ENCODE measurements at regions of chr12 and their contacts with region 1.

Region 1: DNA sequence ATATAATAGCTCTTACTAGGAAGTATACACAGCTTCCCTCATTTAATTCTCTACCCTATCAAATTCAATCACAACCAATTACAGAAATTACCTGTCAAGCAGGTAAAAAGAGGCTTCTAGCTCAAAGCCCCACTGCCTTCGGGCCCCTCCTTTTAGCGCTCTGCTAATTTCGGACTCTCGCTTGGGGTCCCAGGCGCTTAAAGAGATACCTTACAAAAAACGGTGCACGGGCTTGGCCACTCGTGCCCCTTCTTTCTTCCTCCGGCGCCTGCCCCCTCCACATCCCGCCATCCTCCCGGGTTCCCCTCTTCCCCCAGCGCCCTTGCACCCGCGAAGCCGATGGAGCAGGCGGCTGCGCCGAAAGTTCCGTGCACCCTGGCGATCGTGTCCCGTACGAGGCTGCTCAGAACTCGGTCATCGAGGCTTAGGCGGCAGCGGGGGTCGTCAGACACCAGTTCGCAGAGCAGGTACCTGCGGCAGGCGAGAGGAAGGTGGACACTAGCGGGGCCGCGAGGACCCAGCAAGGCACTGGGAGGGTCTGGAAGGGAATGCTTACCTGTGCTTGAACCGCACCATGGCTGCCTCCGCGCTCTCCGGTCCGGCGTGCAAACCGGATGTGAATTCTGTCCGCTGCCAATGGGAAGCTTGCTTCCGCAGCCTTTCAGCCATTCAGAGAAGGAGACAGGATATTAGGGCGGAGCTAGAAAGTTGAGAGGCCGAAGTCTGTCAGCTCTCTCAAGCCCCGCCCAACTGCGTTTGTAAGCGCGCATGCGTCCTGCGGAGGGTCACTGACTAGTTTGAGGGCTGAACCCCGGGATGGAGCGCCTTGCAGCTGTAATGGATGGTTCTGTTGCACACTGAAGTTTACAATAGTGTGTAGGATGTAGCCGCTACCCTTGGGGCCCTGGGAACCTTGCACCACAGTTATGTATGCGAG is at the start of gene POP5:
- DNase-seq: peak; percentile 93
- ATAC-seq: peak; percentile 95
- H3K4me3 ChIP-seq: peak within 1 kb of the TSS; percentile 91
- H3K27ac ChIP-seq: peak within 1 kb of the TSS; percentile 44
- H3K4me1 ChIP-seq: peaks cover 11% of the 10 kb centered on the region
- H3K27me3 ChIP-seq: no peaks in the 10 kb centered on the region; a peak in 1 of 4 replicates
- CTCF ChIP-seq: no peak
- EP300 ChIP-seq: no peak
- POLR2A ChIP-seq: peak; percentile 97
- RAD21 ChIP-seq: no peak
- polyA plus RNA-seq, gene POP5: 217 to 234 TPM

Region 2: GRCh38 chr12:120327593-120327992 is 253.5 kb before region 1 on chr12 and contains the start of gene PLA2G1B:
- CTCF ChIA-PET with region 1: interaction called, 5 read pairs
- POLR2A ChIA-PET with region 1: no interaction called
- RAD21 ChIA-PET with region 1: no interaction called
- SMC1A ChIA-PET with region 1: interaction called, 8 read pairs
- in situ Hi-C with region 1: no loop called
- intact Hi-C with region 1: loop called (anchors 2 kb)
- DNase-seq: no peak
- ATAC-seq: no peak
- H3K4me3 ChIP-seq: no peak within 1 kb of the TSS
- H3K27ac ChIP-seq: no peak within 1 kb of the TSS
- H3K4me1 ChIP-seq: no peaks in the 10 kb centered on the region
- H3K27me3 ChIP-seq: no peaks in the 10 kb centered on the region
- CTCF ChIP-seq: no peak
- EP300 ChIP-seq: no peak
- POLR2A ChIP-seq: no peak
- RAD21 ChIP-seq: no peak
- polyA plus RNA-seq, gene PLA2G1B: not detected

Region 3: GRCh38 chr12:120534203-120534702 is 46.8 kb before region 1 on chr12 and contains the start of gene RNF10:
- CTCF ChIA-PET with region 1: interaction called, 10 read pairs
- POLR2A ChIA-PET with region 1: interaction called, 11 read pairs
- RAD21 ChIA-PET with region 1: interaction called, 10 read pairs
- SMC1A ChIA-PET with region 1: interaction called, 6 read pairs
- in situ Hi-C with region 1: no loop called
- intact Hi-C with region 1: no loop called
- DNase-seq: peak; percentile 68
- ATAC-seq: peak; percentile 78
- H3K4me3 ChIP-seq: peak within 1 kb of the TSS; percentile 70
- H3K27ac ChIP-seq: peak within 1 kb of the TSS; percentile 75
- H3K4me1 ChIP-seq: peaks cover 25% of the 10 kb centered on the region
- H3K27me3 ChIP-seq: no peaks in the 10 kb centered on the region
- CTCF ChIP-seq: no peak
- EP300 ChIP-seq: no peak
- POLR2A ChIP-seq: peak; percentile 95
- RAD21 ChIP-seq: no peak
- polyA plus RNA-seq, gene RNF10: 55.3 to 58.3 TPM

Region 4: DNA sequence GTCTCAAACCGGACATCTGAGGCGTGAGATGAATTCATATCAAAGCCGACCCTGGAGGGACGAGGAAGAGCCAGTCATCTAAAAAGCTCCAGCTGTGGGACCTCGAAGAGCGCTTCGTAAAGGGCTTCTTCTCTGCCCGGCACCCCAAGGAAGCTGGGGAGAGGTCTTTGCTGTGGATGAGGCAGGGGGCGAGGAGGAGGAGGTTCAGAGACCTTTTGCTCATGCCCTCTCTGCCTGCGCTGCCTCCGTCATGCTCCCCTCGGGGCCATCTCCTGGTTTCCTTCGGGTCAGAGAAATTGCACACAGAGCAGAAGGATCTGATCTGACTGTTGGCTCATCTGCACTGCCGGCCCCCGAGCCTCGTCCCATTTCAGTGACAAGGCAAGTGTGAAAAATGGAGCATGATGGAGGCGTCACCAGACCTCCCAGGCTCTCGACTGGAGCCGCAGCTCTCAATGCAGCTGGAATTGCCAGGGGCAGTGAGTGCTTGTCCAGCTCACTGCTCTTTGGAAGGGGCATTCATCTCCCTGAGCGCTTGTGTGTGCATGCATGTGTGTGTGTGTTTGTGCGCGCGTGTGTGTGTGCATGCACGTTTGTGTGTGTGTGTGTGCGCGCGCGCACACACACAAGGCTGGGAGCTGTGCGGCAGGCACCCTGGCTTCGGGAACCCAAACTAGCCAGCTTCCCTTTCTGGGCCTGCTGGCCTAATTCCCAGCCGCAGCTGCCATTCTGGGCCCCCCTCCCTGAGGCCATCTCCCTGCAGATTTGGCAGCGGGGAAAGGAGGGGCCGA is 68.6 kb after region 1 on chr12:
- CTCF ChIA-PET with region 1: interaction called, 104 read pairs
- POLR2A ChIA-PET with region 1: no interaction called
- RAD21 ChIA-PET with region 1: interaction called, 57 read pairs
- SMC1A ChIA-PET with region 1: interaction called, 31 read pairs
- in situ Hi-C with region 1: no loop called
- intact Hi-C with region 1: loop called (anchors 5 kb)
- DNase-seq: no peak
- ATAC-seq: peak; percentile 13
- H3K4me3 ChIP-seq: peak overlapping the region; percentile 61; the same call in 1 of the 2 replicates
- H3K27ac ChIP-seq: no peak overlapping the region
- H3K4me1 ChIP-seq: peaks cover 19% of the 10 kb centered on the region
- H3K27me3 ChIP-seq: no peaks in the 10 kb centered on the region
- CTCF ChIP-seq: no peak
- EP300 ChIP-seq: no peak
- POLR2A ChIP-seq: no peak
- RAD21 ChIP-seq: no peak

Region 5: DNA sequence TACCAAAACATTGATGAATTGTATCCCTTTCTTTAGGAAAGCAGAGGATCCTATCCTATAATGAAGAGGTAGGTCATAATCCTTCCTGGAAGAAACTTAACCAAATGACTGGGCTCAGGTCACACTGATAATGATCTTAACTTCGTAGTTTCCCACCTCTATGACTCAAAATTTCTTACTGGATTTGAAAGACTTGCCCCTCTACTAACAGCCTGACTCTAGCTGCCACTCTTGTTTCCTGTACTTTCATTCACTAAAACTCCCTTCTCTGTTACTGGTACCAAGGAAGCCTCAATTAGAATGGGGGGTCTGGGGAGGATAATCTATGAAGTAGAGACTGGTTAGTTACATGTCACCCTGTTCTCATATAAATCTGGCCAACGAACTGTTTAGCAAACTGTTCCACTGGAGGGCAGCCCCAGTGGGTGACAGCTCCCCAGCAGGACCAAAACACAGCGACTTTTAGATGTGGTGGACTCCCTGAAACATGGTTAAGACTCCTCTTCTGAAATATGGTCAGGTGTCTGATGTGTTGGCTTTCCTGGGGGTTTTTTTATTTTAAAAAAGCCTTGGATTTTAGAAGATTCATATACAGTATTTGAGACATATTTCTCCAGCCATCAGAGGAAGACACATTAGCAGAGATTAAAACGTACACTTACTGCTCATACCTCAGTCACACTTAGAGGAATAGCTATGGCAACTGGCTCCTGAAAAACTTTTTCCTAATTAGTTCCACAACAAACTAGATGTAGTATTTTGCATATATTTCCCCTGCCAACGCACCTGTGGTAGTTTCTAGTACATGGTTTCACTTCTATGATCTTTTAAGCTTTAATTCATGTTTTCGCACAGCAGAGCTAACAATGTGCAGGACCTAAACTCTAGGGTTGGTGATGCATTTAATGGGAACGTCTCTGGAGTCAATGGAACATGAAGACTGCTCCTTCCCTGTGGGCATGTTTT is 216.9 kb after region 1 on chr12:
- CTCF ChIA-PET with region 1: interaction called, 5 read pairs
- POLR2A ChIA-PET with region 1: no interaction called
- RAD21 ChIA-PET with region 1: no interaction called
- SMC1A ChIA-PET with region 1: interaction called, 10 read pairs
- in situ Hi-C with region 1: no loop called
- intact Hi-C with region 1: no loop called
- DNase-seq: peak; percentile 51
- ATAC-seq: peak; percentile 66
- H3K4me3 ChIP-seq: peak overlapping the region; percentile 35
- H3K27ac ChIP-seq: peak overlapping the region; percentile 76
- H3K4me1 ChIP-seq: peaks cover 46% of the 10 kb centered on the region
- H3K27me3 ChIP-seq: no peaks in the 10 kb centered on the region
- CTCF ChIP-seq: 0 out of 6 replicates have a peak, but pooled peaks of 2 of the 3 experiments have one; percentile 1 to 5
- EP300 ChIP-seq: no peak
- POLR2A ChIP-seq: no peak
- RAD21 ChIP-seq: peak; percentile 32; the same call in 1 of the 2 replicates

Region 6: DNA sequence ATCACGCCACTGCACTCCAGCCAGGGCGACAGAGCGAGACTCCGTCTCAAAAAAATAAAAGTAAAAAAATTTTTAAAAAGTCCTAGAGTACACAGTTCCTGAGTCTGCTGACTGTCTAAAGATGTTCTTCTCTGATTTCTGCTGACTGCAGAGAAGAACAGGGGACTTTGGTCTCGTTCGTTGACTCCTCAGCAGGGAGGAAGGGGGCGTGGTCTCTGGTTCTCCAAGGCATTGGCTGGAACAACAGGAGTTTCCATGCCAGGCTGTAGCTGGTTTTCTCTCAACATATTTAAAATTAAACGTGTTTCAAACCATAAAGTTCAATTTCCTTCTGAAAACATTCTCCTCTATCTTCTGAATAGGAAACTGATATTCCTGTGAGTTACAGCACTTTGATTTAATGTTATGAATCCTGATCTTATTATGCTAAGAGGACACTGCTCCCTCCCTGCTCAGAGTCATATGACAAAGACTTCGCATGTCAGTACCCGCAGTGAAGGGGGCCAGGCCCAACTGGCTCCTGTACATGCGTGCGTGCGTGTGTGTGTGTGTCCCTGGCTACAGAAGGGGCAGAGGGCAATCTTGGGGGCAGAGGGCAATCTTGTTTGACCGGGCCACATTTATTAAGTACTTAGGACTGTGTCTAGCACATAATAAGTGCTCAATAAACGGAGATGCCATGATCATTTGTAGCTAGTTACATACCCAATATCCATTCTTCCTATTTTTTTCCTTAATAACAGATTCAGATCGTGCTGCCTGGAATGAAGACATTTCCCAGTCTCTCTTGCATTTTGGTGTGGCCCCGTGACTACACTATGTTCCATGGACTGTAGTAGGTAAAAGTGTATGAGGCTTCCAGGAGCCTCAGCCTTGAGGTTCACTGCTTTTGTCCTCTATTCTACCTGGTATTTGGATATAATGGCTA is 380.8 kb after region 1 on chr12:
- CTCF ChIA-PET with region 1: interaction called, 10 read pairs
- POLR2A ChIA-PET with region 1: no interaction called
- RAD21 ChIA-PET with region 1: no interaction called
- SMC1A ChIA-PET with region 1: interaction called, 3 read pairs
- in situ Hi-C with region 1: no loop called
- intact Hi-C with region 1: no loop called
- DNase-seq: no peak
- ATAC-seq: no peak
- H3K4me3 ChIP-seq: no peak overlapping the region
- H3K27ac ChIP-seq: no peak overlapping the region
- H3K4me1 ChIP-seq: peaks cover 10% of the 10 kb centered on the region
- H3K27me3 ChIP-seq: no peaks in the 10 kb centered on the region
- CTCF ChIP-seq: no peak
- EP300 ChIP-seq: no peak
- POLR2A ChIP-seq: no peak
- RAD21 ChIP-seq: no peak

Region 7: DNA sequence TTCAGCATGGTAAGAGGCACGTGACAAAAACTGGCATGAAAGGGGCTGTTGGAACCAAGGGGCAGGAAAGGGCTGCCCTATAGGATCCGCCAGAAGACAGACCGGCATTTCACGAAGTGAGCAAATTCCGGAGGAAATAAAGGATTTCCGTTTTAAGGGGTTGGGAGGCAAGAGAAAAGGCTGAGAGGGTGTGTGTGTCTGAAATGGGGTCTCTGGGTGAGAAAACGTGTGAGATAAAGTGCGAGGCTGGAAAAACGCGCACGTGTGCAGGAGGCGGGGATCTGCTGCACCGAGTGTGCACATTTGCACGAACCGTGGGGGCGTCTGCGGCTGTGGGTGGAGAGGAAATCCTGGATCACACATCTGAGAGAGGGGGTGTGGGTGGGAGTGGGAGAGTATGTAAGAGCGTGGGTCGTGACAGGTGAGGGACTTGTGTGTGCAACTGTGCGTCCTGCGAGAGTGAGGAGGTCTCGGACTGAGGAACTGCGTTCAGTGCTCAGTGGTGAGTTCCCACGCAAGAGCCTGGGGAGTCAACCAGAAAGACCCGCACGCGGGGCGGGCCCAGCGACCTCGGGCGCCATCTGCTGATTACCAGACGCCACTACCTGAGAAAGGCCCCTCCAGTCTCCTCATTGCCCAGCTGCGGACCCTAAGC is 514.6 kb after region 1 on chr12:
- CTCF ChIA-PET with region 1: interaction called, 12 read pairs
- POLR2A ChIA-PET with region 1: no interaction called
- RAD21 ChIA-PET with region 1: interaction called, 3 read pairs
- SMC1A ChIA-PET with region 1: interaction called, 6 read pairs
- in situ Hi-C with region 1: no loop called
- intact Hi-C with region 1: loop called (anchors 5 kb)
- DNase-seq: peak; percentile 21
- ATAC-seq: peak; percentile 97
- H3K4me3 ChIP-seq: no peak overlapping the region; the same call in 1 of the 2 replicates
- H3K27ac ChIP-seq: no peak overlapping the region
- H3K4me1 ChIP-seq: peaks cover 9% of the 10 kb centered on the region
- H3K27me3 ChIP-seq: no peaks in the 10 kb centered on the region
- CTCF ChIP-seq: peak; percentile 90 to 95 (median 92)
- EP300 ChIP-seq: no peak; a peak in 1 of 4 replicates
- POLR2A ChIP-seq: no peak
- RAD21 ChIP-seq: peak; percentile 71